ENCODE measurements at regions of chr15 and their contacts with region 1.

Region 1: DNA sequence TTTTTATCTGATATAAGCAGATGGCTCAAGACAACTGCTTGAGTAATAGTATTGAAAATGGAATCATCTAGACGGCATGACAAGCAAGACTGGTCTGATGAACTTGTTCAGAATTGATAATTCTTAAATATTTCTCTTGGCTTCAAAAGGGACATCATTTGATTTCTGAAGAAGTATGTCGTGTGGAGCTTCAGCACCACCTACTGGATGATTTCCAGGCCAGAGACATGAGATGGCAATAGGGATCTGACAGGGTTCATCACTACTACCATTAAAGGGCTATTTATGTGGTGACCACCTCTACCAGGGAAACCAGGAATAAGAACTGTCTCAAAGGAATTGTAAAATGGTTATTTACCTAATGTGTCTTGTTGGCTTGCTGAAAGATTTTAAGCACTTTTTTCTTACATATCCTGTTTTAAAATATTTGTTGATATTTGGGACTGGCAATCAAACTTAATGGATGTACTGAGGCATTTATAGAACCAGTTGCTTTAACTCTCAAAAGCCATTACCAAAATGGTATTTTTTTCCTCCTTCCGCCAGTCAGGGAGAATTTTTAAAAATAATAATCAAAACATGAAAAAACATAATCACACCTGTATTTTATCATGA is 99.5 kb upstream of the FAM98B start:
- DNase-seq: no peak
- ATAC-seq: peak; percentile 56

Region 2: GRCh38 chr15:37995461-37996347 is 358.7 kb before region 1 on chr15:
- intact Hi-C with region 1: loop called (anchors 2 kb)
- DNase-seq: no peak
- ATAC-seq: peak; percentile 76

Region 3: DNA sequence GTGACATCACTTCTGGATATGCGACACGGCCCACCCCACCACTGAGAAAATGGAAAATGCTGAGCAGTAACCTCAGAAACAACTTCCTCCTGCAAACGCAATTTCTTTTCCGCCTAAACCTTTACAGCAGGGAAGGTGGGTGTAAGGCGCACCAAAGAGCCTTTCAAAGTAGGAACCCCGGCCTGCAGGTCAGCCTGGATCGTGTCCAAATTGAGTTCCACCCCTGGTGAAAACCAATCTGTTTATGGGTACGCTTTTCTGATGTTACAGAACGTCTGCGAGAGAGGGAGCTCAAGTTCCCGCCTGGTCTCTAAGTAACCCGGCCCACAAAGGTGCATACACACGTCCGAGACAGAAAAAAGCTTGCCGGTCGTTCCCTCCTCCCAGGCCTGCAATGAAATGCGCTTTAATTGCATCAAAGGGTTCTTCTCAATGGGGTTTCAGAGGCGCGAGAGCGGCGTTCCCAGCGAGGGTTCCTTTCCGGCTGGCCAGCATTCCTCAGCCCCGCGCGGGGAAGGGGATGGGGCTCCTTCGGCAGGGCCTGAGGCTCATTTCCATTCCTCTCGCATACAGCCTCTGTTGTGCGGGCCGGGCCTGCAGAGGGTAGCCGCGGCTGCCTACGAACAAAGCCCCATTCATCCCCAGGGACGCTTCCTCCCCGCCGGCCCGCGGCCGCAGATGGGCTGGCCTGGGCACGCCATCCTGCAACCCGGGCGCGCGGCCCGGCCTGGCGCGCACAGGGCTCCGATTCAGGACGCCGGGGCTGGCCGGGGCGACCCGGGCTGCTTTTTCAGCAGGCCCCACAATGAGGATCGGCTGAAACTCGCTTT is 281.9 kb before region 1 on chr15:
- intact Hi-C with region 1: loop called (anchors 5 kb)
- DNase-seq: peak; percentile 86
- ATAC-seq: peak; percentile 91

Region 4: DNA sequence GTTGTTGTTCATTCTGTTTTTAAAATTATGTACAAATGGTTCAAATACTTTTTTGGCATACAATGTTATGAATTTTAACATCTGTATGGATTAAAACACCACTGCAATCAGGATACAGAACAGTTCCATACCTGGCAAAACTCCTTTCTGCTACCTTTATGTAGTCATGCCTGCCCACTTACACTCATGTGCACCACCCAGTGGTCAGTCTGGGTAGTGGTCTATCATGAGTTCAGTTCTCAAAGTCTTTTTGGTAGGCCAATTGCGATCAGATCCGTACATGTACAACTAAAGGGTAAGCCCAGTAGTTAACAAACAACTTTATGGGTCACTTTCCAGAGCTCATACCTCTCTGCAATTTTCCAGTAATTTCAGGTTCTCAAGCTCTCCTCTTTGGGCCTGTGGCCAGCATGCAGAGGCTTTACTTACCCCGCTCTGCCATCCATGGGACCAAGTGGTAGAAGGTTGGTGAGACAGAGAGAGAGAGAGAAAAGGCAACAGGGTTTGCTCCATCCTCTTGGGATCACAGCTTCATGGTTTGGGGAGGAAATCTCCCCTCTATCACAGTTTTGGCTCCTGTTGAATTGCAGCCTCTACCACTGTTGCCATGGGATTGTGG is 35.6 kb after region 1 on chr15:
- intact Hi-C with region 1: loop called (anchors 5 kb)
- DNase-seq: no peak
- ATAC-seq: peak; percentile 57